ENCODE measurements at regions of chr7 and their contacts with region 1.

Region 1: GRCh38 chr7:604001-604883 is 84.6 kb upstream of the PDGFA start:
- DNase-seq: peak; percentile 81
- ATAC-seq: peak; percentile 71
- H3K4me3 Mint-ChIP-seq: peak overlapping the region; percentile 83
- H3K27ac Mint-ChIP-seq: peak overlapping the region; percentile 98
- H3K4me1 Mint-ChIP-seq: peaks cover 63% of the 10 kb centered on the region
- H3K27me3 Mint-ChIP-seq: no peaks in the 10 kb centered on the region
- CTCF ChIP-seq: no peak

Region 2: DNA sequence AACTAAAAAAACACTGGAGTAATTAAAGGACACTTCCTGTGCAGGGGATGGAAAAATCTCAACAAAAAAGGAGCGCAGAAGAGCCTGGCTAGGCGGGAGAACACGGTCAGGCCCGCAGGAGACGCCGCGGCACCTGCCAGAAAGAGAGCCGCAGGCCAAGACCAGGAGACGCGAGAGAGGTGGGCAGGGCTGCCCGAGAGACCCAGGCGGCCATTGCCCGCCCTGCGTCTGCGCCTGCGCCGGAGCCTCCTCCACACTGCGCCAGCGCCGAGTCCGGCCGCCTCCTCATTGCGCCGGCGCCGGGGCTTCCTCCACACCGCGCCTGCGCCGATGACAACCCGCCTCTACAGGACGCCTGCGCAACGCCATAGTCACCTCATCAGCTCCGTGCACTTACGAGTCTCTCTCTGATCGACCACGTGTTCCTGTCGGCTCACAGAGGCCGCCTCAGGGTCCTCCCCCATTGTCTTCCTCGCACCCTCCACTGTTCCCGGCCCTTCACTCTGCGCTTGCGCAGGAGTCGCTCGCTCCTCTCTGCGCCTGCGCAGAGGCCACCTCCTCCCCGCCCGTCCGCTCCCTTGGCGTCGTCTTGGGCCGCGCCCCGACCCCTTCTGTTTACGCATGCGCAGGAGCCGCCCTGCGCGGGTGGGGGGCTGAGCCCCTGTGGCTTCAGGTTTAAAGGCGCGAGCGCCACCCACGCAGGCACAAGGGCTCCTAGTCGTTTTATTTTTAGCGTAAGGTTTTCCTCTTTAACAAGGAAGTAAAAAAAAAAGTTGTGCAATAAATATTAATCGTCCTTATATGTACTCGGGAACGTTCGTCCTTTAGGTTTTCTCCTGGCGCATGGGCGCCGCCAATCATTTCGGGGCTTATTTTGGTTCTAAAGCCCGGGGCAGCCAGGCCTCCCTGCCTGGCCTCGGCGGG is 455.0 kb before region 1 on chr7:
- CTCF ChIA-PET with region 1: no interaction called
- POLR2A ChIA-PET with region 1: interaction called, 6 read pairs
- intact Hi-C with region 1: loop called (anchors 1 kb)
- DNase-seq: peak; percentile 98
- ATAC-seq: peak; percentile 96
- H3K4me3 Mint-ChIP-seq: peak overlapping the region; percentile 95
- H3K27ac Mint-ChIP-seq: peak overlapping the region; percentile 100
- H3K4me1 Mint-ChIP-seq: peaks cover 36% of the 10 kb centered on the region
- H3K27me3 Mint-ChIP-seq: no peaks in the 10 kb centered on the region
- CTCF ChIP-seq: no peak

Region 3: GRCh38 chr7:519484-520390 is 84.5 kb before region 1 on chr7 and contains the start of gene PDGFA:
- CTCF ChIA-PET with region 1: no interaction called
- POLR2A ChIA-PET with region 1: interaction called, 4 read pairs
- intact Hi-C with region 1: loop called (anchors 2 kb)
- DNase-seq: peak; percentile 47
- ATAC-seq: peak; percentile 15
- H3K4me3 Mint-ChIP-seq: peak within 1 kb of the TSS; percentile 82
- H3K27ac Mint-ChIP-seq: no peak within 1 kb of the TSS
- H3K4me1 Mint-ChIP-seq: peaks cover 30% of the 10 kb centered on the region
- H3K27me3 Mint-ChIP-seq: peaks cover 8% of the 10 kb centered on the region
- CTCF ChIP-seq: no peak
- total RNA-seq, gene PDGFA: 6.0 and 7.3 TPM in 2 replicates

Region 4: GRCh38 chr7:674454-675410 is 70.5 kb after region 1 on chr7:
- CTCF ChIA-PET with region 1: no interaction called
- POLR2A ChIA-PET with region 1: no interaction called
- intact Hi-C with region 1: no loop called
- DNase-seq: no peak
- ATAC-seq: no peak
- H3K4me3 Mint-ChIP-seq: no peak overlapping the region
- H3K27ac Mint-ChIP-seq: no peak overlapping the region
- H3K4me1 Mint-ChIP-seq: no peaks in the 10 kb centered on the region
- H3K27me3 Mint-ChIP-seq: no peaks in the 10 kb centered on the region
- CTCF ChIP-seq: no peak

Region 5: GRCh38 chr7:726084-726853 is 122.0 kb after region 1 on chr7 and contains the start of gene DNAAF5:
- CTCF ChIA-PET with region 1: no interaction called
- POLR2A ChIA-PET with region 1: interaction called, 5 read pairs
- intact Hi-C with region 1: loop called (anchors 1 kb)
- DNase-seq: peak; percentile 87
- ATAC-seq: peak; percentile 89
- H3K4me3 Mint-ChIP-seq: peak within 1 kb of the TSS; percentile 83
- H3K27ac Mint-ChIP-seq: peak within 1 kb of the TSS; percentile 65
- H3K4me1 Mint-ChIP-seq: peaks cover 22% of the 10 kb centered on the region
- H3K27me3 Mint-ChIP-seq: no peaks in the 10 kb centered on the region
- CTCF ChIP-seq: no peak
- total RNA-seq, gene DNAAF5: 23.5 and 25.9 TPM in 2 replicates

Region 6: GRCh38 chr7:1144269-1144771 is 540.1 kb after region 1 on chr7:
- CTCF ChIA-PET with region 1: no interaction called
- POLR2A ChIA-PET with region 1: no interaction called
- intact Hi-C with region 1: loop called (anchors 10 kb)
- DNase-seq: no peak
- ATAC-seq: peak; percentile 43
- H3K4me3 Mint-ChIP-seq: peak overlapping the region; percentile 24
- H3K27ac Mint-ChIP-seq: peak overlapping the region; percentile 35
- H3K4me1 Mint-ChIP-seq: peaks cover 41% of the 10 kb centered on the region
- H3K27me3 Mint-ChIP-seq: no peaks in the 10 kb centered on the region
- CTCF ChIP-seq: no peak